ENCODE measurements at regions of chr4 and their contacts with region 1.

Region 1: GRCh38 chr4:36224972-36225903 is 19.1 kb downstream of the ARAP2 start:
- DNase-seq: no peak
- H3K4me3 Mint-ChIP-seq: no peak overlapping the region
- H3K27ac Mint-ChIP-seq: no peak overlapping the region
- H3K4me1 Mint-ChIP-seq: peaks cover 67% of the 10 kb centered on the region
- H3K27me3 Mint-ChIP-seq: no peaks in the 10 kb centered on the region

Region 2: DNA sequence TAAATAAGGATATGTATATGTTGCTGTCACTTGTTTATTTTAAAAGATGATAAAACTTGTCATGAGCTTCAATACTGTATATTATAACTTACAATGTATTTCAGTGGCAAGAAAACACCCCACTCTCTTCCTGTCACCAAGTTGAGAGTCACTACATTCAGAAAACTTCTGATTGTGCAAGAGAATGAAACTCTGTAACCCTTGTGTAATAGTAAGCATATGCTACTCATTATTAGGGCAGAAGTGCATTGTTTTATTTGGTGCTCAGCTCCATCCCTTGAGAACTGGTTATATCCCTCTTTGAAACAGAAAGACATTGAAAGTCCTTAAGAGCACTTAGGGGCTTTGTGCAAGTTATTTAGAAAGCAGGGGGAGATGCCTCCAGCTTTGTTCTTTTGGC is 575.5 kb before region 1 on chr4:
- CTCF ChIA-PET with region 1: no interaction called
- POLR2A ChIA-PET with region 1: no interaction called
- intact Hi-C with region 1: no loop called
- DNase-seq: no peak
- H3K4me3 Mint-ChIP-seq: no peak overlapping the region
- H3K27ac Mint-ChIP-seq: no peak overlapping the region
- H3K4me1 Mint-ChIP-seq: no peaks in the 10 kb centered on the region
- H3K27me3 Mint-ChIP-seq: no peaks in the 10 kb centered on the region

Region 3: DNA sequence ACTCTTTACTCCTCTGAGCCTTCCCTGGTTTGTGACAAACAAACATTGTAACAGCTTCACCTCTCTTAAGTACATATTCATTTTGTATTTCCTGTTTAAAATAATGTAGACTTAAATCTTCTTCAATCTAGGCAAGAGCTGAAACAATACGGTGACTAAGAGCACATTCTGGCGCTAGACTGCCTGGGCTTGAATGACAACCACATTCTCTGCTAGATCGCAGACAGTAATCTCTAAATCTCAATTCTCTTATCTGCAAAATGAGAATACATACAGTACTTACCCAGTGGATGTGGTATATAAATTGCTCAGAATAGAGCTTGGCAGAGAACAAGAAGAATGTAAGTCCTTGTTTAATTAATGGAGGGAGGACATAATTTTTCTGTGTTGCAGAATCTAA is 125.7 kb before region 1 on chr4:
- CTCF ChIA-PET with region 1: no interaction called
- POLR2A ChIA-PET with region 1: no interaction called
- intact Hi-C with region 1: loop called (anchors 5 kb)
- DNase-seq: no peak
- H3K4me3 Mint-ChIP-seq: no peak overlapping the region
- H3K27ac Mint-ChIP-seq: no peak overlapping the region
- H3K4me1 Mint-ChIP-seq: no peaks in the 10 kb centered on the region
- H3K27me3 Mint-ChIP-seq: no peaks in the 10 kb centered on the region

Region 4: GRCh38 chr4:36477861-36478260 is 252.6 kb after region 1 on chr4:
- CTCF ChIA-PET with region 1: no interaction called
- POLR2A ChIA-PET with region 1: no interaction called
- intact Hi-C with region 1: no loop called
- DNase-seq: no peak
- H3K4me3 Mint-ChIP-seq: no peak overlapping the region
- H3K27ac Mint-ChIP-seq: no peak overlapping the region
- H3K4me1 Mint-ChIP-seq: no peaks in the 10 kb centered on the region
- H3K27me3 Mint-ChIP-seq: peaks cover 9% of the 10 kb centered on the region